ENCODE measurements at regions of chr14 and their contacts with region 1.

Region 1: DNA sequence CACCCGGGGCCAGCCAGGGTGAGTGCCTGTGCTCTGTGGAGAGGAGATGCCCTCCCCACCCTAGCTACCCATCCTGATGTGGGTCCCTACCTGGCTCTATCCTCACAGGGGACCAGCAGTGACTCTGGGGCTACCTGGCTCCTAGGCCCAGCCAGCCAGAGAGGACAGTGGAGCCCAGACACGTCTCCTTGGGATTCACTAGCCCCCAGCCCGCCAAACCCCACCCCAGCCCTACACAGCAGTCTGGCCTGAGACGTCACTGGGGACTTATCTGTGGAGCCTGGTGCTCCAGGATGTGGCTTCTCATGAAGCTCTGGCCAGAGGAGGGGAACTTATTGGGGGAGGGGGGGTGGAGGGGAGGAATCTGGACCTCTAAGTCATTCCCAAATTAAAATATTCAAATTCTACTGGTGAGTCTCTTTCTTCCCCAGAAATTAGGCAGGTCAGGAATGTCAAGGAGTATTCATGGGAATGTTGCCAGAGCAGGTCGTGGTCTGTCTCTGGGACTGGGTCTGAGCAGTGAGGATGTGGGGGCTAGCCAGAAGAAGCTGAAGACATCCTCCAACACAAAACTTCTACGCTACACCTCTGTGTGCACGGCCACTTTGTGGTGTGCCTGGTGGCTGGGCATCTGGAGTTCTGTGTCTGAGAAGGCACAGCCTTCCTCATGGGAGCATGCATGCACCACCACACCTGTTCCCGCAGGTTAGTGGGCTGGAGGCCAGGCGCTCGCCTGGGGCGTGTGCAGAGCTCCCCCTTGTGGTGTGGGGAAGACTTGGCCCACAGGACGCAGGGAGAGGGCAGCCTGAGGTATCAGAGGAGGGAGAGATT is 2.7 kb downstream of the CMTM5 start:
- DNase-seq: peak; percentile 46 to 62
- ATAC-seq: peak; percentile 75 to 91; a peak in 4 of 6 replicates
- H3K4me3 ChIP-seq: no peak overlapping the region
- H3K27ac ChIP-seq: no peak overlapping the region
- H3K4me1 ChIP-seq: no peaks in the 10 kb centered on the region
- CTCF ChIP-seq: peak; percentile 86
- EP300 ChIP-seq: no peak
- POLR2A ChIP-seq: no peak
- RAD21 ChIP-seq: peak; percentile 84 to 89

Region 2: GRCh38 chr14:23258256-23258655 is 121.3 kb before region 1 on chr14:
- CTCF ChIA-PET with region 1: interaction called, 36 read pairs
- POLR2A ChIA-PET with region 1: no interaction called
- DNase-seq: no peak
- ATAC-seq: no peak
- H3K4me3 ChIP-seq: no peak overlapping the region
- H3K27ac ChIP-seq: no peak overlapping the region
- H3K4me1 ChIP-seq: no peaks in the 10 kb centered on the region
- CTCF ChIP-seq: no peak
- EP300 ChIP-seq: no peak
- POLR2A ChIP-seq: no peak
- RAD21 ChIP-seq: no peak

Region 3: DNA sequence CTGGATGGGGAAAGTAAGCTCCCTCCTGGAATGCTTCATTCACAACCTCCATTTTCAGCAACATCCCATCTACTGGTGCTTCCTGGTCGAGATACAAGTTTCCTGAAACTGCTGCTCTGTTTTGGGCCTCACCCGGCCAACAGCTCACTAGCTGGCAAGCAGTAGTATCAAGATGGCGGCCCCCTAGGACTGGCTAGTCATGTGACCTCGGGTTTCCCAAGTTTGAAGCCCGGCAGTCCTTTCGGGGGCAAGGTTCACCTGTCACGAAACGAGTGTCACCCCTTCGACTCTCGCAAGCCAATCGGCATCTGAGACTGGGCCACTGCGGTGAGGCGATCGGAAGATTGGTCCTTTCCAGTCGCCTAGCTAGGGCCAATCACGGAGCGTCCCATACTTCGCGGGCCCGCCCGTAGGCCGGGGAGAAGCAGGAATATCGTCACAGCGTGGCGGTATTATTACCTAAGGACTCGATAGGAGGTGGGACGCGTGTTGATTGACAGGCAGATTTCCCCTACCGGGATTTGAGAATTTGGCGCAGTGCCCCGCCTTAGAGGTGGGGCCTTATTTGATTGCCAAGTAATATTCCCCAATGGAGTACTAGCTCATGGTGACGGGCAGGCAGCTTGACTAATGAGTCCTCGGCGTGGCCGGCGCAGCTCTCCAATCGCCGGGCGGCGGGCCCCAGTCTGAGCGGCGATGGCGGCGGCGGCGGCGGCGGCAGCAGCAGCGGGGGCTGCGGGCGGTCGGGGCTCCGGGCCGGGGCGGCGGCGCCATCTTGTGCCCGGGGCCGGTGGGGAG is 58.6 kb before region 1 on chr14 and contains the start of gene PABPN1:
- CTCF ChIA-PET with region 1: interaction called, 186 read pairs
- POLR2A ChIA-PET with region 1: no interaction called
- DNase-seq: peak; percentile 98 to 100
- ATAC-seq: peak; percentile 90 to 96
- H3K4me3 ChIP-seq: peak within 1 kb of the TSS; percentile 97
- H3K27ac ChIP-seq: peak within 1 kb of the TSS; percentile 99 to 100
- H3K4me1 ChIP-seq: peaks cover 24% of the 10 kb centered on the region
- CTCF ChIP-seq: no peak
- EP300 ChIP-seq: no peak
- POLR2A ChIP-seq: no peak
- RAD21 ChIP-seq: no peak
- polyA plus RNA-seq, gene PABPN1: 197 and 234 TPM in 2 replicates

Region 4: DNA sequence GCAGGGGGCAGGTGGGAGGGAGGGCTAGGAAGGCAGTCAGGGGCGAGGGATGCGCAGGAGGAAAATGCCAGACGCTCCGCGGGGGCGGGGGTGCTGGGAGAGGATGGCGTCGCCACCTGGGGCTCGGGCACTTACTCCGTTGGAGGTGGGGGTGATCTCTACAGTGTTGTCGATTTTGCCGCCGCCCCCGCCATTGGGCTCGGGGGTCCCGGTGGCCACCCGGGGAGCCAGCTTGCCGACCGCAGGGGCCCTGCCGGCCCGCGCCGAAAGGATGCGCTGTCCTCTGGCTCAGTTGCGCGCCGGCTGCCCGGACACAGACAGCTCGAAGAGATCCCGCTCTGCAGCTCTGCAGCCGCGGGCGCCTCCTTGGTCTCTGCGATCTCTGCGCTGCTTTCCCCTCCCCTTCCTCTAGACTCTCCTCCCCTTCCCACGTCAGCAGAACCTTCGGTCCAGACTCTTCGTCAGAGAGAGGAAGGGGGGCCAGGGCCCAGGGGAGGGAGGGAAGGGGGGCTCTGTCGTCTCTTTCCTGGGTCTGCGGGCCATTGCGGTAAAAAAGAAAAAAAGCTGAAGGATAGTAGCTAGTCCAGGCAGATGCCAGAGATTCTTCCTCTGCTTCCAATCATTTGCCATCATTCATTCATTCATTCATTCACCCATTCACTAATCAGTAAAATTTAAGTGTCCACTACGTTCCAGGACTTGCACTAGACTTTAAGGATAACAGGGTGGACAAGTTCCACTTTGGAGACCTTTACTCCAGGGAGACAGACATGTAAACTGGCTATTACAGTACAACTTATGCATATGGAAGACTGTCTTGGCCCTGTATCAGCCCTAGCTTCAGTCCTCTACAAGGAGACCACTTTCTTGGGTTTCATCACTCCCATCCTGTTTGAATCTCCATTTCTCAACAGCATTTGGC is 26.8 kb before region 1 on chr14 and contains the start of gene SLC22A17:
- CTCF ChIA-PET with region 1: interaction called, 80 read pairs
- POLR2A ChIA-PET with region 1: no interaction called
- DNase-seq: peak; percentile 60 to 65
- ATAC-seq: peak; percentile 88 to 96
- H3K4me3 ChIP-seq: peak within 1 kb of the TSS; percentile 52
- H3K27ac ChIP-seq: peak within 1 kb of the TSS; percentile 38 to 83; a peak in 5 of 6 replicates
- H3K4me1 ChIP-seq: 0 out of 3 replicates have a peak, but pooled peaks cover 3% of the 10 kb centered on the region
- CTCF ChIP-seq: no peak
- EP300 ChIP-seq: no peak
- POLR2A ChIP-seq: peak; percentile 84
- RAD21 ChIP-seq: no peak
- polyA plus RNA-seq, gene SLC22A17: 3.5 and 4.6 TPM in 2 replicates

Region 5: GRCh38 chr14:23399591-23399990 is 20.0 kb after region 1 on chr14:
- CTCF ChIA-PET with region 1: interaction called, 106 read pairs
- POLR2A ChIA-PET with region 1: no interaction called
- DNase-seq: no peak
- ATAC-seq: no peak
- H3K4me3 ChIP-seq: no peak overlapping the region
- H3K27ac ChIP-seq: no peak overlapping the region
- H3K4me1 ChIP-seq: no peaks in the 10 kb centered on the region
- CTCF ChIP-seq: no peak
- EP300 ChIP-seq: no peak
- POLR2A ChIP-seq: no peak
- RAD21 ChIP-seq: no peak

Region 6: GRCh38 chr14:23436327-23437132 is 56.9 kb after region 1 on chr14:
- CTCF ChIA-PET with region 1: interaction called, 21 read pairs
- POLR2A ChIA-PET with region 1: no interaction called
- DNase-seq: no peak
- ATAC-seq: no peak
- H3K4me3 ChIP-seq: no peak overlapping the region
- H3K27ac ChIP-seq: no peak overlapping the region
- H3K4me1 ChIP-seq: no peaks in the 10 kb centered on the region
- CTCF ChIP-seq: no peak
- EP300 ChIP-seq: no peak
- POLR2A ChIP-seq: no peak
- RAD21 ChIP-seq: no peak